ENCODE measurements at regions of chr10 and their contacts with region 1.

Region 1: DNA sequence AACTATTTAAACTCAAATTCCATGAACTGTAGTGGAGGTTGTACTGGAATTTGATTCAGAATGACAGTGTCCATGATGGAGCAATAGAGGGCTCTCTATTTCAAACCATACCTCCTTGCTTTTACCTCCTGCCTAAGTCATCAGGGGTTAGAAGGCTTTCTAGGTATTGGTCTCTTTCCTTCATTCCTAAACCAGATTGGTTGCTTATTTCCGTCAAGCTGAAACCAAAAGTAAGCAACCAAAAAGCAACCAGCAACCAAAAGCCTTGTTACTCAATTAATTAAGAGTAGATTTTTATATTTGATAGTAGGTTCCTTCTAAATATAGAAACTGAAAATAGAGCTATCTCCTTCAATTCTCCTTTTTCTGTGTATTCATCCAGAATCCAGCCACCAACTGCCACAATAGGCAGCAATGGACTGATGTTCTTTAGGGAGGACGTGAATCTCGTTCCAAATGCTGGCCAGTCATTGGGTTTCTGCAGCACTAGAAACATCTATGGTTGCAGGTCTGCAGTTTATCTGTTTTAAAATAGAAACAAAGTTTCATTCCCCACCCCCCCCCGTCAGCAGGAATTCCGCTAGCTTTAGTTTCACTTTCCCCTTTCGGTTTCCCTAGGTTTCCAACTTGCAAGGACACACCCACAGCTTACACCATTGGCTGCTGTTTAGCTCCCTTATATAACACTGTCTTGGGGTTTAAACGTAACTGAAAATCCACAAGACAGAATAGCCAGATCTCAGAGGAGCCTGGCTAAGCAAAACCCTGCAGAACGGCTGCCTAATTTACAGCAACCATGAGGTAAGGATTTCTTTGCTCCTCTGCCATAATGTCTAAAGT is at the start of gene IFIT1:
- DNase-seq: peak in 29 of 42 donors; percentile 14 to 88 (median 65)

Region 2: GRCh38 chr10:89414146-89414878 is 22.2 kb after region 1 on chr10 and contains the start of gene IFIT5:
- intact Hi-C with region 1: loop called (anchors 2 kb)
- DNase-seq: peak; percentile 48 to 90 (median 79)

Measured in head of caudate nucleus (tissue), 42 donors.